PC-9 (cell line): ENCODE measurements at regions of chr12 and their contacts with region 1.

Region 1: GRCh38 chr12:89103831-89104230 is 248.5 kb downstream of the DUSP6 start:
- DNase-seq: no peak
- H3K4me3 ChIP-seq: no peak overlapping the region
- H3K27ac ChIP-seq: no peak overlapping the region
- H3K4me1 ChIP-seq: no peaks in the 10 kb centered on the region
- H3K27me3 ChIP-seq: no peaks in the 10 kb centered on the region
- CTCF ChIP-seq: no peak

Region 2: DNA sequence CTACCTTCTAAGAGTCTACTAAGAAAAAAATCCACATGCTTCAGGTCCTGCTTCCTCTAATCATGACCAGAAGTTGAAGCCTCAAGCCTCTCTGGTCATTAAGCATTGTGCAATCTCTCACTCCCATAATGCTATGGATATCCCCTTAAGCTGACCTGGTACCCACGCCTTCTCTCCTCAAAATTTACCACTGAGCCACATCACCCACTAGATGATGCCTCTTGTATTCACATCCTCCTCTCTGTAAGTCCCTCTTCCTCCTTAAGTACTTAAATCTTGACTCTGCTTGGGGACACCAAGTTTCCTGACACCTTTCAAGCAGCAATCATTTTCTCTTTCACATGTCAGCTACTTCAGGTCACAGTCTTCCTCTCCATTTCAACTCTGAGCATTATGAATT is 410.9 kb after region 1 on chr12:
- CTCF ChIA-PET with region 1: interaction called, 10 read pairs
- POLR2A ChIA-PET with region 1: no interaction called
- intact Hi-C with region 1: no loop called
- DNase-seq: no peak
- H3K4me3 ChIP-seq: no peak overlapping the region
- H3K27ac ChIP-seq: no peak overlapping the region
- H3K4me1 ChIP-seq: no peaks in the 10 kb centered on the region
- H3K27me3 ChIP-seq: no peaks in the 10 kb centered on the region
- CTCF ChIP-seq: no peak